Activated naive CD4-positive, alpha-beta T cell treated with anti-CD3 and anti-CD28 coated beads for 36 hours (primary cell): ENCODE measurements at regions of chr14 and their contacts with region 1.

Region 1: GRCh38 chr14:22556990-22557623 is 31.9 kb downstream of the DAD1 start:
- DNase-seq: peak; percentile 95
- H3K4me3 Mint-ChIP-seq: peak overlapping the region; percentile 74
- H3K27ac Mint-ChIP-seq: peak overlapping the region; percentile 97
- H3K4me1 Mint-ChIP-seq: peaks cover 84% of the 10 kb centered on the region
- H3K27me3 Mint-ChIP-seq: no peaks in the 10 kb centered on the region

Region 2: DNA sequence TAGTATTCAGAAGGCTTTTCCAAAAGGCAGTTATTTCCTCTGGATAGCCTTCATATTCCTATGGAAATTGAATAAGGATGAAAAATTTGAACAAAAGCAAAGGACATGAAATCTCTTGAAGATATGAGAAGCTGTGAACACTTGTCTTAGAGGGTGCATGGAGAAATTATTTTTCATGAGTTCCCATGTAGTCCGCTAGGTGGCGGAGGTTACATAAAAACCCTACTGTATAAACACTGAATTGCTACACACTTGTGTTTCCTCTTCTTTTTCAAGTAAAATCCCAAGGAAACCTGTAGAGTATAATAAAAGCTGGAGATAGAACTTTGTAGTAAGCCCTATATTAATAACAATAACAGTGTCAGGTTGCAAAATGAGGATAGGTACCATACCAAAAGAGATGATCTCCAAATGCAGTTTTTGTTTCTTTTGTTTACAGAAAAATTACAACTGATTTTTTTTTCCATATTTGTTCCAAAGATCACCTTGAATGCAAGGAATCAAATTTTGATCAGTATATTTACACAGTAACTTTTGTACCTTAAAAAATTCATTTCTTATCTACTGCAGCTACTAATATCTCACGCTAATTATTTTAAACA is 845.6 kb before region 1 on chr14:
- CTCF ChIA-PET with region 1: no interaction called
- intact Hi-C with region 1: loop called (anchors 2 kb)
- DNase-seq: peak; percentile 57
- H3K4me3 Mint-ChIP-seq: peak overlapping the region; percentile 67
- H3K27ac Mint-ChIP-seq: peak overlapping the region; percentile 68
- H3K4me1 Mint-ChIP-seq: peaks cover 5% of the 10 kb centered on the region
- H3K27me3 Mint-ChIP-seq: peaks cover 2% of the 10 kb centered on the region

Region 3: DNA sequence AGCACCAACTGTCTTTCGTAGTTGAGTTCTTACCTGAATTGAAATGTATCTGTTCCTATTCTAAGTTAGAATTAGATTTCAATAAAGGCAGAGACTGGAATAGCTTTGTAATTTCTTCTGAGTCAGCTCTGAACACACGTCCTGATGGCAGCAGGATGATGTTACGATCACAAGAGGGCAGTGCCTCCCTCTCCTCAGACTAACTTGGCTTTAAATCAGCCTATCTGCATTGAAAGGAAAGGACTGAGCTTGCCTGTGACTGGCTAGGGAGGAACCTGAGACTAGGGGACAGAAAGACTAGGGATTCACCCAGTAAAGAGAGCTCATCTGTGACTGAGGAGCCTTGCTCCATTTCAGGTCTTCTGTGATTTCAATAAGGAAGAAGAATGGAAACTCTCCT is 559.8 kb before region 1 on chr14:
- CTCF ChIA-PET with region 1: interaction called, 3 read pairs
- intact Hi-C with region 1: loop called (anchors 1 kb)
- DNase-seq: peak; percentile 65
- H3K4me3 Mint-ChIP-seq: peak overlapping the region; percentile 92
- H3K27ac Mint-ChIP-seq: peak overlapping the region; percentile 96
- H3K4me1 Mint-ChIP-seq: peaks cover 32% of the 10 kb centered on the region
- H3K27me3 Mint-ChIP-seq: no peaks in the 10 kb centered on the region

Region 4: DNA sequence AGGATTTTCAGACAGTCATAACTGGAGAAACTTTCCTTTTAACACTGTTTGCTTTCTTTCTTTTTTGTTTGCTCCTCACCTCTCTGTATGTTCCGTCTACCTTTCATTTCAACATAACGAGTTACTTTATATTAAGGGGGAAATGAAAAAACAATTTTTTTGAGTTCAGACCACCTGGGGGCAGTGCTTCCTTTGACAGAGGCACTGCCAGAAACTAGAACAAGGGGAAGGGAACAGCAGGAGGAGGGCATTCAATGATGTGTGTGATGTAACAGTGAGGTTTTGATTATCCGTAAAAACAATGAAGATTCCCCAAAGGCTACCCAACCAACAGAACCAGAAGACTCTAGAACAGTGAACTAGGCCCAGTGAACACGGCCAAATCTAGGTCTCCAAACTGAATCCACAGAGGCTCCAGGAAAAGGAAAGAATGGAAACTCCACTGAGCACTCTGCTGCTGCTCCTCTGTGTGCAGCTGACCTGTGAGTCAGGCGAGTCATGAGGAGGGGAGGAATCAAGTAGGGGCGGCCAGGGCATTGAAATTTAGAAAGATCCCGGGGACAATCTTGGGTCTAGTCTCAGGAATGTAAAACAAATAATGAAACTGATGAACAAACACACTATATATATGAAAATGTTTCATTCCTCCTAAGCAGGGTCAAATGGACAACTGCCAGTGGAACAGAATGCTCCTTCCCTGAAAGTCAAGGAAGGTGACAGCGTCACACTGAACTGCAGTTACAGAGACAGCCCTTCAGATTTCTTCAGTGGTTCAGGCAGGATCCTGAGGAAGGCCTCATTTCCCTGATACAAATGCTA is 291.6 kb before region 1 on chr14:
- CTCF ChIA-PET with region 1: no interaction called
- intact Hi-C with region 1: no loop called
- DNase-seq: no peak
- H3K4me3 Mint-ChIP-seq: no peak overlapping the region
- H3K27ac Mint-ChIP-seq: no peak overlapping the region
- H3K4me1 Mint-ChIP-seq: peaks cover 10% of the 10 kb centered on the region
- H3K27me3 Mint-ChIP-seq: no peaks in the 10 kb centered on the region

Region 5: GRCh38 chr14:22303589-22304195 is 253.4 kb before region 1 on chr14:
- CTCF ChIA-PET with region 1: no interaction called
- intact Hi-C with region 1: loop called (anchors 5 kb)
- DNase-seq: no peak
- H3K4me3 Mint-ChIP-seq: peak overlapping the region; percentile 68
- H3K27ac Mint-ChIP-seq: peak overlapping the region; percentile 71
- H3K4me1 Mint-ChIP-seq: no peaks in the 10 kb centered on the region
- H3K27me3 Mint-ChIP-seq: no peaks in the 10 kb centered on the region

Region 6: DNA sequence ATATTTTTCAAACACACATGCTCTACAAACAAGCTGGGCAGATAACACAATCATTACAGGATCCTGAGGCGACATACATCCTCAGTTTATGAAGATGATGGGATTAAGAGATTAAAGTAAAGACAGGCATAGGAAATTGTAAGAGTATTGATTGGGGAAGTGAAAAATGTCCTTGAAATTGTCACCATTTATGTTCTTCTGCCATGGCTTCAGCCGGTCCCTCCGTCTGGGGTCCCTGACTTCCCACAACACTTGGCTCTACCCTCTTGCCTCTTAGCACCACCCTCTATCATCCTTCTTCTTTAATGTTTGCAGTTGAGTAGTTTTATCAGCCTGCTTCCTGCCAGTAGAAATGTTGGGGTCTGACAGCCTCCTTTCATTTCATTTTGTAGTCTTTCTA is 212.4 kb before region 1 on chr14:
- CTCF ChIA-PET with region 1: no interaction called
- intact Hi-C with region 1: no loop called
- DNase-seq: no peak
- H3K4me3 Mint-ChIP-seq: no peak overlapping the region
- H3K27ac Mint-ChIP-seq: no peak overlapping the region
- H3K4me1 Mint-ChIP-seq: no peaks in the 10 kb centered on the region
- H3K27me3 Mint-ChIP-seq: no peaks in the 10 kb centered on the region

Region 7: DNA sequence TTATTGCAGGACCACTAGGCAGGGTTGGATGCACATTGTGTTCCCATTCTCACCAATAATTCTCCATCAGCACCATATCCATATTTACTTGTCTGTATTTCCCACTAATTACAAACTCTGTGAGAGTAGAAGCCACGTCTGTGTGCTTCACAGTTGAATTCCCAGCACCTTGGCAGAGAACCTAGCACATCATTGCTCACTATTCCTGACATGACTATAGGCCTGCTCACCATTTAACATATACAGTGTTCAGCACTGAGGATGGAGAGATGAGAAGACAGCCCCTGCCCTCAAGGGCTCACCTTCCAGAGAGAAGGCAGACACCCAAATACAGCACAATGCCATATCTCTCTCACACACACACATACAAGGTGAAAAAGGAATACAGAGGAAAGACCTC is 26.9 kb after region 1 on chr14:
- CTCF ChIA-PET with region 1: interaction called, 27 read pairs
- intact Hi-C with region 1: loop called (anchors 1 kb)
- DNase-seq: peak; percentile 60
- H3K4me3 Mint-ChIP-seq: peak overlapping the region; percentile 39
- H3K27ac Mint-ChIP-seq: peak overlapping the region; percentile 85
- H3K4me1 Mint-ChIP-seq: peaks cover 72% of the 10 kb centered on the region
- H3K27me3 Mint-ChIP-seq: no peaks in the 10 kb centered on the region

Region 8: GRCh38 chr14:22713631-22713950 is 156.5 kb after region 1 on chr14:
- CTCF ChIA-PET with region 1: interaction called, 3 read pairs
- intact Hi-C with region 1: loop called (anchors 1 kb)
- DNase-seq: no peak
- H3K4me3 Mint-ChIP-seq: peak overlapping the region; percentile 84
- H3K27ac Mint-ChIP-seq: peak overlapping the region; percentile 63
- H3K4me1 Mint-ChIP-seq: peaks cover 13% of the 10 kb centered on the region
- H3K27me3 Mint-ChIP-seq: peaks cover 11% of the 10 kb centered on the region

Region 9: GRCh38 chr14:22723815-22724214 is 166.7 kb after region 1 on chr14:
- CTCF ChIA-PET with region 1: no interaction called
- intact Hi-C with region 1: no loop called
- DNase-seq: no peak
- H3K4me3 Mint-ChIP-seq: no peak overlapping the region
- H3K27ac Mint-ChIP-seq: no peak overlapping the region
- H3K4me1 Mint-ChIP-seq: no peaks in the 10 kb centered on the region
- H3K27me3 Mint-ChIP-seq: no peaks in the 10 kb centered on the region

Region 10: GRCh38 chr14:22994762-22995275 is 437.7 kb after region 1 on chr14:
- CTCF ChIA-PET with region 1: no interaction called
- intact Hi-C with region 1: no loop called
- DNase-seq: peak; percentile 56
- H3K4me3 Mint-ChIP-seq: no peak overlapping the region
- H3K27ac Mint-ChIP-seq: no peak overlapping the region
- H3K4me1 Mint-ChIP-seq: no peaks in the 10 kb centered on the region
- H3K27me3 Mint-ChIP-seq: no peaks in the 10 kb centered on the region

Region 11: GRCh38 chr14:23057757-23058653 is 500.9 kb after region 1 on chr14:
- CTCF ChIA-PET with region 1: no interaction called
- intact Hi-C with region 1: loop called (anchors 5 kb)
- DNase-seq: peak; percentile 92
- H3K4me3 Mint-ChIP-seq: peak overlapping the region; percentile 80
- H3K27ac Mint-ChIP-seq: no peak overlapping the region
- H3K4me1 Mint-ChIP-seq: peaks cover 16% of the 10 kb centered on the region
- H3K27me3 Mint-ChIP-seq: peaks cover 5% of the 10 kb centered on the region